ENCODE measurements at regions of chr17 and their contacts with region 1.

Region 1: GRCh38 chr17:45640141-45640850 is 143.8 kb upstream of the CRHR1 start:
- DNase-seq: peak; percentile 46 to 77 (median 62)
- ATAC-seq: peak; percentile 59 to 84 (median 78)
- H3K4me3 ChIP-seq: no peak overlapping the region
- H3K27ac ChIP-seq: no peak overlapping the region
- H3K4me1 ChIP-seq: no peaks in the 10 kb centered on the region
- H3K27me3 ChIP-seq: no peaks in the 10 kb centered on the region
- CTCF ChIP-seq: peak in 11 of 12 donors; percentile 84 to 99 (median 94)
- POLR2A ChIP-seq: no peak

Region 2: GRCh38 chr17:45775576-45776011 is 135.3 kb after region 1 on chr17:
- intact Hi-C with region 1: no loop called
- DNase-seq: peak; percentile 38 to 80 (median 60)
- ATAC-seq: peak; percentile 20 to 86 (median 68)
- H3K4me3 ChIP-seq: no peak overlapping the region
- H3K27ac ChIP-seq: no peak overlapping the region
- H3K4me1 ChIP-seq: peaks cover 0 to 5% (median 0%) of the 10 kb centered on the region in 12 donors
- H3K27me3 ChIP-seq: peaks cover 0 to 36% (median 8%) of the 10 kb centered on the region in 9 donors
- CTCF ChIP-seq: no peak
- POLR2A ChIP-seq: no peak

Region 3: DNA sequence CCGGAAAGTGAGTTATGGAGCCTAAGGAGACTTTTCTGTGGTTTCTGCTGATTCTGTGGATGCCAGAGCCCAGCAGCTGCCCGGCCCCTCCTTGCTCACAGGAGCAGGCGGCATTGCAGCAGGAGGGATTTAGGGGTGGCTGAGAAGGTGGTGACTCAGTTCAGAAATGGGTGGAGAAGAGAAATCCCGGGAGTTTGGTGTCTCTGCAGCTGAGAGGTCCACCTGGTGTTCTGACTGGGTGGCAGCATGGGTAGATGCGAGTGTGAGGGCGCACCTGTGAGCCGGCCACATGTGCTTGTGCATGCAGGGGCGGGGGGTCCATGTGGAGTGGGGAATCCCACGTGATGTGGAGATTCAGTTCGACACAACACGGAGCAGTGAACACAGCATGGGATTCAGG is 188.3 kb after region 1 on chr17:
- intact Hi-C with region 1: loop called (anchors 1 to 2 kb)
- DNase-seq: no peak
- ATAC-seq: no peak
- H3K4me3 ChIP-seq: no peak overlapping the region
- H3K27ac ChIP-seq: no peak overlapping the region
- H3K4me1 ChIP-seq: no peaks in the 10 kb centered on the region
- H3K27me3 ChIP-seq: peaks cover 0 to 29% (median 0%) of the 10 kb centered on the region in 9 donors
- CTCF ChIP-seq: no peak
- POLR2A ChIP-seq: no peak

Region 4: GRCh38 chr17:45834471-45835396 is 194.4 kb after region 1 on chr17:
- intact Hi-C with region 1: loop called (anchors 1 to 2 kb)
- DNase-seq: peak in 1 of 5 donors; percentile 48
- ATAC-seq: no peak
- H3K4me3 ChIP-seq: no peak overlapping the region
- H3K27ac ChIP-seq: no peak overlapping the region
- H3K4me1 ChIP-seq: no peaks in the 10 kb centered on the region
- H3K27me3 ChIP-seq: peaks cover 0 to 34% (median 0%) of the 10 kb centered on the region in 9 donors
- CTCF ChIP-seq: no peak
- POLR2A ChIP-seq: no peak

Region 5: GRCh38 chr17:45852535-45853297 is 212.4 kb after region 1 on chr17:
- intact Hi-C with region 1: loop called in 8 of 10 experiments (anchors 1 to 5 kb)
- DNase-seq: peak in 2 of 5 donors; percentile 40 to 48
- ATAC-seq: no peak
- H3K4me3 ChIP-seq: no peak overlapping the region
- H3K27ac ChIP-seq: no peak overlapping the region
- H3K4me1 ChIP-seq: peaks cover 0 to 3% (median 0%) of the 10 kb centered on the region in 12 donors
- H3K27me3 ChIP-seq: peaks cover 0 to 23% (median 0%) of the 10 kb centered on the region in 9 donors
- CTCF ChIP-seq: peak; percentile 79 to 91 (median 86)
- POLR2A ChIP-seq: no peak